Activated CD4-positive, alpha-beta T cell treated with anti-CD3 and anti-CD28 coated beads for 36 hours (primary cell): ENCODE measurements at regions of chr1 and their contacts with region 1.

Region 1: DNA sequence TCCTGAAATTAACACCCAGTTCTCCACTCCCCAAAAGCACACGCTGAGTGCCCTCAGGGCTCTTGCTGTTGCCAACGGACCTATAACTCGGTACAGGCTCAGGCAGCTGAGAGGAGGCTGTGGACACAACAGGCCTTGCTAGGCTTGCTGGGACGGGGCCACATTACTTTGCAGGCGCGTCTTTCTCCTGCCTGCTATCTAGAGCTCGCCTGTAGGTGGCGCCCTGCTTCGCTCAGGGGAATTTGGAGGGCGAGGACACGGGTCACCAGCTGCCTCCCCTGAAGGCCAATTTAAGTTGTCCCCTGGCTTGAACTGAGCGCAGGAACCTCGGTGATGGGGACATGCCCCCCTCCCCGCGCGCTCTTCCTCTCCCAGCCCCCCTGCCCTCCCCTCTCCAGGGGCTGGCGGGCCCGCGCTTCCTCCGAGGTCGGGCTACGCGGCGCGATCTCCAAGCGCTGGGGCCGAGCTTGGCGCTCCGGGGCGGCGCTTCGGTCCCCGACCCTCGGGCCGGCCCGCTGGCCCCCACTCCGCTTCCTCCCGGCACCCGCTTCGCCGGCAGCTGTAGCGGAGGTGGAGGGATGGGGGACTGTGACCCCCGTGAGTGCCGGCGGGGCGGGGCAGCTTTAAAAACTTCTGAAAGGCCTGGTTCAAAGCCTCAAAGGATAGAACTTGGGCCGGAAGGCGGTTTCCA is 32.4 kb upstream of the NFIA start:
- DNase-seq: peak; percentile 93
- ATAC-seq: peak; percentile 86
- H3K4me3 Mint-ChIP-seq: peak overlapping the region; percentile 65
- H3K27ac Mint-ChIP-seq: no peak overlapping the region
- H3K4me1 Mint-ChIP-seq: peaks cover 22% of the 10 kb centered on the region
- H3K27me3 Mint-ChIP-seq: peaks cover 46% of the 10 kb centered on the region

Region 2: GRCh38 chr1:61077676-61078541 is 27.9 kb after region 1 on chr1:
- CTCF ChIA-PET with region 1: interaction called, 60 read pairs
- POLR2A ChIA-PET with region 1: interaction called, 4 read pairs
- intact Hi-C with region 1: loop called (anchors 1 kb)
- DNase-seq: peak; percentile 95
- ATAC-seq: peak; percentile 85
- H3K4me3 Mint-ChIP-seq: peak overlapping the region; percentile 83
- H3K27ac Mint-ChIP-seq: peak overlapping the region; percentile 90
- H3K4me1 Mint-ChIP-seq: peaks cover 49% of the 10 kb centered on the region
- H3K27me3 Mint-ChIP-seq: peaks cover 7% of the 10 kb centered on the region

Region 3: DNA sequence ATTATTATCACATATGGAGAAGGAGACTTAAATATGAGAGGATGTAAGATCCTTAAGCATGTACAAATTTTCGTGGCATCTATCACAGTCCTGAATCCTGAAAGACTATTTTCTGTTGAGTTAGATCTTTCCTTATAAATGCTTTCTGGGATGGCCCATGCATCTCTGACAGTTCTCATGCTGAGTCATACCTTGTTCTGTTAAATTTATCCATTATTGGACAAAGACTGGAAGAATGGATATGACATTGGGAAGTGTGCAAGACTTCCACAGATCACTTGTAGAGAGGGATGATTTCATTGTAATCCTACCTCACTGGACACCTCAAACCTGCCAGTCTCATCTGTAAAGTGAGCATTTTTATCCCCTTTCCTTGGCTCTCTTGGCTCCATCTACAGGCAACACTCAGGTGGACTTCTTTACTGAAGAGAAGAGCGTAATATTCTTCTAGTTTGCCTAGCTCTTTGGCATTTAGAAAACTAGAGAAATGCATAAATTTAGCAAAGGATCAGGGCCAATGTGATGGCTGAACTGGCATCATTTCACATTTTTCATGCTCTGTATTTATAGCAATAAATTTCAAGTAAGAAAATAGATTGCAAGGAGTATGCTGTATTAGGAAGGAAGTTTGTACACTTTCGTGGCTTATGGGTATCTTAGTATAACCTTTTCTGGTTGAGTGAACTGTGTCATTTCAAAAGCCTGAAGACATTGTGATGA is 160.6 kb after region 1 on chr1:
- CTCF ChIA-PET with region 1: interaction called, 4 read pairs
- POLR2A ChIA-PET with region 1: no interaction called
- intact Hi-C with region 1: loop called in 1 of 2 experiments (anchors 5 kb)
- DNase-seq: no peak
- ATAC-seq: no peak
- H3K4me3 Mint-ChIP-seq: no peak overlapping the region
- H3K27ac Mint-ChIP-seq: no peak overlapping the region
- H3K4me1 Mint-ChIP-seq: no peaks in the 10 kb centered on the region
- H3K27me3 Mint-ChIP-seq: no peaks in the 10 kb centered on the region

Region 4: GRCh38 chr1:61332196-61332753 is 282.3 kb after region 1 on chr1:
- CTCF ChIA-PET with region 1: interaction called, 5 read pairs
- POLR2A ChIA-PET with region 1: interaction called, 5 read pairs
- intact Hi-C with region 1: loop called (anchors 5 to 10 kb)
- DNase-seq: peak; percentile 40
- ATAC-seq: peak; percentile 94
- H3K4me3 Mint-ChIP-seq: no peak overlapping the region
- H3K27ac Mint-ChIP-seq: peak overlapping the region; percentile 48
- H3K4me1 Mint-ChIP-seq: peaks cover 21% of the 10 kb centered on the region
- H3K27me3 Mint-ChIP-seq: peaks cover 5% of the 10 kb centered on the region

Region 5: DNA sequence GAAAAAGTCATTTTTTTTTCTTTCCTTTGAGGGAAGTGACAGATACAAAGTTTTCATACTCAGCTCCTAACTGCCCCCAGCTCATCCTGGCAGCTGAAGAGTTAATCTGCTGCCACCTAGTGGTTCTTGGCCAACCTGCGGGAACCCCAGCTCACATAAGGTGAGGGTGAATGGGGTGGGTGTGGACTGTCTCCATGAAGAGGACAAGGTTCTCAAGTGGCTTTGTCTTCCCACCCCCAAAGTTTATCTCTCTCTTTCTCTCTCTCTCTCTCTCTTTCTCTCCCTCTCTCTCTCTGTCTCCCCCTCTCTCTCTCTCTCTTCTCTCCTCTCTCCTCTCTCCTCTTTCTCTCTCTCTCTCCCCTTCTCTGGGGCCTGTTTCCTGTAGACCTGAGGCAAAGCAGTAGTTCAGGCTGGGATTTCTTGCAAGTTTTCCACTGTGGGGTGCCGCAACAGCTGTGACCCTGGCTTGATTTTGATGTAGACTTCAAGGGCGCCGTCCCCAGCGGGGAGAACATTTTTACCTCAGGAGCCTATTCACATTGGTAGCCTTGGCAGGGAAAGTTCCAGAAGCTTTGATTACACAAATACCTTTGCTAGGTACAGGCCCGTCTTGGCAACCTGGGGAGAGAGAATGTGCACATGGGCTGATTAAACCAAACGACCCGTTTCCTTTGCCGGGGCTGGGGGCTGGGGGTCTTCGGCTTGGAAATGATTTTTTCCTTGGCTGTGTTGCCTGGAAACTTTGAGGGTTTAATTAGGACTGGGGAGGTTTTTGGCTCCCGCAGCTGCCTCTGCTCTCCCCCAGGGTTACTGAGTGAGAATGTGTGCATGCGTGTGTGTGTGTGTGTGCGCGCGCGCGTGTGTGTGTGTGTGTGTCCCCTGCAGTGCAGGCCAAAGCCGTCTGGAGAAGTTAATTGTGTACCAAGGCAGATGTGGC is 539.0 kb after region 1 on chr1:
- CTCF ChIA-PET with region 1: interaction called, 6 read pairs
- POLR2A ChIA-PET with region 1: no interaction called
- intact Hi-C with region 1: loop called (anchors 2 to 10 kb)
- DNase-seq: peak; percentile 81
- ATAC-seq: peak; percentile 97
- H3K4me3 Mint-ChIP-seq: no peak overlapping the region
- H3K27ac Mint-ChIP-seq: no peak overlapping the region
- H3K4me1 Mint-ChIP-seq: no peaks in the 10 kb centered on the region
- H3K27me3 Mint-ChIP-seq: peaks cover 5% of the 10 kb centered on the region

Region 6: GRCh38 chr1:62436466-62437256 is 1386.7 kb after region 1 on chr1 and contains the start of gene USP1:
- CTCF ChIA-PET with region 1: no interaction called
- POLR2A ChIA-PET with region 1: no interaction called
- intact Hi-C with region 1: loop called in 1 of 2 experiments (anchors 10 kb)
- DNase-seq: peak; percentile 99
- ATAC-seq: peak; percentile 92
- H3K4me3 Mint-ChIP-seq: peak within 1 kb of the TSS; percentile 89
- H3K27ac Mint-ChIP-seq: peak within 1 kb of the TSS; percentile 98
- H3K4me1 Mint-ChIP-seq: peaks cover 29% of the 10 kb centered on the region
- H3K27me3 Mint-ChIP-seq: no peaks in the 10 kb centered on the region
- total RNA-seq, gene USP1: 62.4 to 73.4 TPM